ENCODE measurements at regions of chr14 and their contacts with region 1.

Region 1: GRCh38 chr14:21275261-21275858 is 4.5 kb upstream of the RPGRIP1 start:
- DNase-seq: no peak
- ATAC-seq: no peak
- H3K4me3 ChIP-seq: no peak overlapping the region
- H3K4me3 Mint-ChIP-seq: no peak overlapping the region
- H3K27ac ChIP-seq: no peak overlapping the region
- H3K27ac Mint-ChIP-seq: peak overlapping the region; percentile 11 to 68
- H3K4me1 ChIP-seq: peaks cover 0 to 2% of the 10 kb centered on the region in 2 experiments
- H3K4me1 Mint-ChIP-seq: peaks cover 0 to 4% (median 4%) of the 10 kb centered on the region in 3 donors
- H3K27me3 ChIP-seq: no peaks in the 10 kb centered on the region
- H3K27me3 Mint-ChIP-seq: no peaks in the 10 kb centered on the region

Region 2: DNA sequence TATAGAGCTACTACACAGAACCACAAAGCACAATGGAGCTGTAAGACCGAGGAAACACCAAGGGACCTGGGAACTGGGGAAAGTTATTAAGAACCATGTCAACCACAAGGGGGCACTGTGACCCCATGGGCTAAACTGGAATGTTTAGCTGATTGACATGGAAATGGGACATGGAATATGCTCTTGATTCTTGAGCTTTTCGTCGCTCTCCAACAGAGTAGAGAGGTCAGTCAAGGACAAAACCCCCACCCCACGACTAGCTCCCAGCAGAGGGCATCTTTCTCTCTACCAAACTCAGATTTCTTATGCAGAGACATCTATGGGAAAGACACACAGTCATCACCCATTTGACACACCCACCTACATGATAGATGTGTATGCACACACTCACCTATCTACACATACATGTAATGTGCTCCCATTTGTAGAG is 260.6 kb before region 1 on chr14:
- CTCF ChIA-PET with region 1: no interaction called
- POLR2A ChIA-PET with region 1: no interaction called
- DNase-seq: peak; percentile 23 to 91 (median 73)
- ATAC-seq: peak; percentile 68 to 87 (median 79)
- H3K4me3 ChIP-seq: no peak overlapping the region
- H3K4me3 Mint-ChIP-seq: no peak overlapping the region
- H3K27ac ChIP-seq: no peak overlapping the region
- H3K27ac Mint-ChIP-seq: no peak overlapping the region
- H3K4me1 ChIP-seq: no peaks in the 10 kb centered on the region
- H3K4me1 Mint-ChIP-seq: no peaks in the 10 kb centered on the region
- H3K27me3 ChIP-seq: peaks cover 0 to 9% of the 10 kb centered on the region in 2 experiments
- H3K27me3 Mint-ChIP-seq: peaks cover 17 to 25% of the 10 kb centered on the region in 2 donors

Region 3: GRCh38 chr14:21233457-21234076 is 41.8 kb before region 1 on chr14:
- CTCF ChIA-PET with region 1: interaction called in 1 of 2 experiments, 4 read pairs
- POLR2A ChIA-PET with region 1: interaction called in 1 of 2 experiments, 13 read pairs
- DNase-seq: peak in 1 of 35 experiments; percentile 53
- ATAC-seq: no peak
- H3K4me3 ChIP-seq: no peak overlapping the region
- H3K4me3 Mint-ChIP-seq: peak overlapping the region in 2 of 3 donors; percentile 19 to 31
- H3K27ac ChIP-seq: peak overlapping the region; percentile 69
- H3K27ac Mint-ChIP-seq: peak overlapping the region; percentile 56 to 76
- H3K4me1 ChIP-seq: peaks cover 42 to 55% of the 10 kb centered on the region in 2 experiments
- H3K4me1 Mint-ChIP-seq: peaks cover 84 to 93% (median 92%) of the 10 kb centered on the region in 3 donors
- H3K27me3 ChIP-seq: no peaks in the 10 kb centered on the region
- H3K27me3 Mint-ChIP-seq: no peaks in the 10 kb centered on the region

Measured in T-cell (primary cell).